ENCODE measurements at regions of chr7 and their contacts with region 1.

Region 1: DNA sequence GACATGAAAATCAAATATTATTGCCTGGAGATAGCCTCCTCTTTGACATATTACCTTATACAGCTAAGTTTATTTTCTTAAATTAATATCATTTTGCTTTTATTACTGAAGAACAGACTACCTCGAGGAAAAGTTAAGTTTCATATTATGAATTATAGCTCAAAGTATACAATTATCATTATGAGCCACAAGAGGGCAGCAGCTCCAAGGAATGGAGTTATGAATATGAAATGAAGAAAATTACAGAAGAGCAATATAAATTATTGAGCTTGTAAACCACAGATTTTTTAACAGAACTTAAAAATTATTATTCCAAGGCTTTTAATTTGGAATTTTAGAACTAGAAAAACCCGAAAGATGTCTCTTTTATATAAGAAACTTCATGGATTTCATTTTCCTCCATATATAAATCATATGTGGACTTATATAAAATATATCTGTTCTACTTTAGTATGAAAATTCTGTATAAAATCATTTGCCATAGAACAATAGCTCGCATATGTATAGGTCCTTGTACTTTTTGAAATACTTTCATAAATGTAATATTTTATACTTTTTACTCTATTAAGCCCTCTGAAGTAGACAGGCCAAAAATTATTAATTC is 40.1 kb downstream of the IQUB start:
- DNase-seq: peak; percentile 49
- ATAC-seq: no peak
- H3K4me3 Mint-ChIP-seq: no peak overlapping the region
- H3K27ac Mint-ChIP-seq: no peak overlapping the region
- H3K4me1 Mint-ChIP-seq: no peaks in the 10 kb centered on the region
- H3K27me3 Mint-ChIP-seq: peaks cover 6% of the 10 kb centered on the region

Region 2: GRCh38 chr7:123231027-123232000 is 263.0 kb before region 1 on chr7:
- CTCF ChIA-PET with region 1: no interaction called
- POLR2A ChIA-PET with region 1: no interaction called
- DNase-seq: no peak
- ATAC-seq: no peak
- H3K4me3 Mint-ChIP-seq: no peak overlapping the region
- H3K27ac Mint-ChIP-seq: no peak overlapping the region
- H3K4me1 Mint-ChIP-seq: no peaks in the 10 kb centered on the region
- H3K27me3 Mint-ChIP-seq: no peaks in the 10 kb centered on the region

Region 3: GRCh38 chr7:123472750-123473445 is 21.4 kb before region 1 on chr7:
- CTCF ChIA-PET with region 1: no interaction called
- POLR2A ChIA-PET with region 1: no interaction called
- DNase-seq: no peak
- ATAC-seq: no peak
- H3K4me3 Mint-ChIP-seq: no peak overlapping the region
- H3K27ac Mint-ChIP-seq: no peak overlapping the region
- H3K4me1 Mint-ChIP-seq: no peaks in the 10 kb centered on the region
- H3K27me3 Mint-ChIP-seq: no peaks in the 10 kb centered on the region

Region 4: DNA sequence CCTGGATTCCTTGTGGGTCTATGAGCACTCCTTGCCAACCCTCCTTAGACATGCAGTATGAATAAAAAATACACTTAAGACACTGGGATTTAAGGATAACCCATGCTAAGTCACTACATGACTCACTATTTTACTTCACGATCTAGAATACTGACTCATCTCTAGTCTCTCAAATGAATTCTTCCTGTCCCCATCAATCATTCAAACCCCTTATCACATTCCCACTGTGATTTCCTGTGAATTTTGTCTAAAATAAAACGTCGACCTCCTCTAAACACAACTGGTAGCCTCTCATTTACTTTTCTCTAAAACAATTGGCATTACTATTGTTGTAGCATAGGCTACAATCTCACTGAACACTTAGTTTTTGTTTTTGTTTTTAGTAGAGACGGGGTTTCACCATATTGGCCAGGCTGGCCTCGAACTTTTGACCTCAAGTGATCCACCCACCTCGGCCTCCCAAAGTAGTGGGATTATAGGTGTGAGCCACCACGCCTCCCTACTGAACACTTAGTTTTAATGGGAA is 44.0 kb after region 1 on chr7:
- CTCF ChIA-PET with region 1: interaction called, 17 read pairs
- POLR2A ChIA-PET with region 1: interaction called, 5 read pairs
- DNase-seq: no peak
- ATAC-seq: no peak
- H3K4me3 Mint-ChIP-seq: no peak overlapping the region
- H3K27ac Mint-ChIP-seq: no peak overlapping the region
- H3K4me1 Mint-ChIP-seq: peaks cover 10% of the 10 kb centered on the region
- H3K27me3 Mint-ChIP-seq: peaks cover 9% of the 10 kb centered on the region

Region 5: GRCh38 chr7:123557398-123558288 is 63.3 kb after region 1 on chr7 and contains the start of gene NDUFA5:
- CTCF ChIA-PET with region 1: interaction called, 16 read pairs
- POLR2A ChIA-PET with region 1: no interaction called
- DNase-seq: peak; percentile 98
- ATAC-seq: peak; percentile 96
- H3K4me3 Mint-ChIP-seq: no peak within 1 kb of the TSS
- H3K27ac Mint-ChIP-seq: no peak within 1 kb of the TSS
- H3K4me1 Mint-ChIP-seq: peaks cover 7% of the 10 kb centered on the region
- H3K27me3 Mint-ChIP-seq: peaks cover 2% of the 10 kb centered on the region
- total RNA-seq, gene NDUFA5: 50.2 to 50.9 TPM

Measured in activated CD8-positive, alpha-beta T cell treated with anti-CD3 and anti-CD28 coated beads, Interleukin-2, amount 10 ng/mL, durations not matched to agents 7 days and 5 days (primary cell).